ENCODE measurements at regions of chr12 and their contacts with region 1.

Region 1: DNA sequence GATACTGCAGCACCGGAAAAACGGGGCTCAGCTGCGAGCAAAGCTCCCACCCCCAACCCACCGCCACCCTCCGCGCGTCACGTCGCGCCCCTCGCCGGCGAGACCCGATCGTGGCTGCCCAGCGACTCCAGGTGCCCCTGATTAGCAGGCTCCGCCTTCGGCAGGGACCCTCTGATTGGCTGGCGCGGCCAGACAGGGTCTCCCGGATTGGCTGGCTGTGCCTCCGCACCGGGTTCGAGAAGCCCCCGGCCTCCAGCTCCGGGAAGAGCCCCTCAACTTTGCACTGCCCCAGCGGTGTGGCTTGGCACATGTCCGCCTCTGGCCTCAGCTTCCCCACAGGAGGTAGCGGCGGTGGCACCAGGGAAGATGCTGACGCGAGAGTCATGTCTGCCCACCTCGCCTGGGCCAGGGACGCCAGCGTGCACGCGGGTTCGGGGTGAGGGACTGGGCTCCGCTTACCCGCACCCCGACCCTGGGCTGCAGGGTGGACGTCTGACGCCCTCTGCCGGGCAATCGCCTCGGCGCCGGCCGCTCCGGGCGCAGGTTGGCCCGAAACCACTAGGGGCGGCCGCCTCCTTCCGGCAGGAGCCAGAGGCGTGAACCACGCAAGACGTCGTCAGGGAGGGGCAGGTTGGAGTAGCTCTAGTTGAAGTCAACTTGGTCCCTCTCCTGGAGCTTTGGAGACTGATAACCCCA is 498 bp upstream of the RHOF start:
- DNase-seq: peak; percentile 95
- H3K4me3 Mint-ChIP-seq: peak overlapping the region; percentile 85
- H3K27ac Mint-ChIP-seq: peak overlapping the region; percentile 88
- H3K4me1 Mint-ChIP-seq: peaks cover 60% of the 10 kb centered on the region
- H3K27me3 Mint-ChIP-seq: no peaks in the 10 kb centered on the region

Region 2: GRCh38 chr12:121688966-121689365 is 105.0 kb before region 1 on chr12:
- CTCF ChIA-PET with region 1: interaction called, 45 read pairs
- POLR2A ChIA-PET with region 1: no interaction called
- DNase-seq: no peak
- H3K4me3 Mint-ChIP-seq: no peak overlapping the region
- H3K27ac Mint-ChIP-seq: no peak overlapping the region
- H3K4me1 Mint-ChIP-seq: peaks cover 15% of the 10 kb centered on the region
- H3K27me3 Mint-ChIP-seq: peaks cover 3% of the 10 kb centered on the region

Region 3: GRCh38 chr12:121719926-121720414 is 74.0 kb before region 1 on chr12:
- CTCF ChIA-PET with region 1: interaction called, 26 read pairs
- POLR2A ChIA-PET with region 1: no interaction called
- DNase-seq: no peak
- H3K4me3 Mint-ChIP-seq: no peak overlapping the region
- H3K27ac Mint-ChIP-seq: no peak overlapping the region
- H3K4me1 Mint-ChIP-seq: peaks cover 7% of the 10 kb centered on the region
- H3K27me3 Mint-ChIP-seq: no peaks in the 10 kb centered on the region

Region 4: GRCh38 chr12:121816930-121817647 is 23.1 kb after region 1 on chr12:
- CTCF ChIA-PET with region 1: interaction called, 1,058 read pairs
- POLR2A ChIA-PET with region 1: interaction called, 11 read pairs
- DNase-seq: no peak
- H3K4me3 Mint-ChIP-seq: no peak overlapping the region
- H3K27ac Mint-ChIP-seq: no peak overlapping the region
- H3K4me1 Mint-ChIP-seq: peaks cover 20% of the 10 kb centered on the region
- H3K27me3 Mint-ChIP-seq: no peaks in the 10 kb centered on the region

Region 5: DNA sequence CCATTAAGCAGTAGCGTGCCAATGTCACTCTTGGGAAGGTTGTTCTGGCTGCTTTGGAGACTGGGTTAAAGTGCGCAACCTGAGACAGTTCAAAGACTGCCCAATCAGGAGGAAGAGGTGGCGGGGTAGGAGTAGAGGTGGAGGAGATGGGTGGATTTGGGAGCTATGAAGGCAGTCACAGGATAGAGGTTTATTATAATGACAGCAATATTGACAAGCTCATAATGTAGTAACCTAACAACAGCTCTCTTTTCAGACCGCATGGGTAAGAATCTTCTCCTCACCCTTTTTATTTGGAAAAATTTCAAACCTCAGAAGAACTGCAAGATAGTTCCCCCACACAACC is 89.3 kb after region 1 on chr12:
- CTCF ChIA-PET with region 1: interaction called, 32 read pairs
- POLR2A ChIA-PET with region 1: interaction called, 6 read pairs
- DNase-seq: no peak
- H3K4me3 Mint-ChIP-seq: no peak overlapping the region
- H3K27ac Mint-ChIP-seq: no peak overlapping the region
- H3K4me1 Mint-ChIP-seq: peaks cover 9% of the 10 kb centered on the region
- H3K27me3 Mint-ChIP-seq: peaks cover 6% of the 10 kb centered on the region

Region 6: GRCh38 chr12:121903202-121903601 is 109.2 kb after region 1 on chr12:
- CTCF ChIA-PET with region 1: interaction called, 10 read pairs
- POLR2A ChIA-PET with region 1: no interaction called
- DNase-seq: no peak
- H3K4me3 Mint-ChIP-seq: no peak overlapping the region
- H3K27ac Mint-ChIP-seq: no peak overlapping the region
- H3K4me1 Mint-ChIP-seq: no peaks in the 10 kb centered on the region
- H3K27me3 Mint-ChIP-seq: no peaks in the 10 kb centered on the region